Caco-2 (cell line): ENCODE measurements at regions of chr13 and their contacts with region 1.

Region 1: GRCh38 chr13:38530492-38530891 is 156.4 kb upstream of the FREM2 start:
- DNase-seq: no peak
- H3K4me3 ChIP-seq: no peak overlapping the region
- H3K4me3 Mint-ChIP-seq: no peak overlapping the region
- H3K27ac Mint-ChIP-seq: no peak overlapping the region
- H3K4me1 ChIP-seq: no peaks in the 10 kb centered on the region
- H3K4me1 Mint-ChIP-seq: peaks cover 10% of the 10 kb centered on the region
- H3K27me3 ChIP-seq: no peaks in the 10 kb centered on the region; the same call in 1 of the 2 replicates
- H3K27me3 Mint-ChIP-seq: no peaks in the 10 kb centered on the region
- CTCF ChIP-seq: peak; percentile 32 to 52

Region 2: DNA sequence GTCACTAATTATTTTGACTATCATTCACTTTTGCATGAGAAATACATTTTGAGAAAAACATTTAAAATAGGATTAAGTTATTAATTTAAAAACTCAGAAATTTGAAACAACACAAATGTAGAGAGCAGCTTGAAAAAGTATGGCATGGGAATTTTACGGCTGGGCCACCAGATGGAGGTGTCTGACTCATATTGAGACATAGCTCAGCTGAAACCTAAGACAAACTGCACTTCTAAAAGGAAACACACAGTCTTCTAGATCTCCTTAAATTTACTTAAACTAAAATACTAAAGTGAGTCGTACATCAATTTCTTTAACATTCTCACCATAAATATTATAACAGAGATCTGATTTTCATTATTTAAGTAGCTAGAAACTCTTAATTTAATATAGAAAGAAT is 890.0 kb before region 1 on chr13:
- CTCF ChIA-PET with region 1: interaction called, 3 read pairs
- POLR2A ChIA-PET with region 1: no interaction called
- intact Hi-C with region 1: loop called (anchors 10 kb)
- DNase-seq: peak in 1 of 2 experiments; percentile 10
- H3K4me3 ChIP-seq: no peak overlapping the region
- H3K4me3 Mint-ChIP-seq: no peak overlapping the region
- H3K27ac Mint-ChIP-seq: no peak overlapping the region
- H3K4me1 ChIP-seq: no peaks in the 10 kb centered on the region
- H3K4me1 Mint-ChIP-seq: no peaks in the 10 kb centered on the region
- H3K27me3 ChIP-seq: no peaks in the 10 kb centered on the region
- H3K27me3 Mint-ChIP-seq: peaks cover 21% of the 10 kb centered on the region
- CTCF ChIP-seq: peak; percentile 40 to 49

Region 3: DNA sequence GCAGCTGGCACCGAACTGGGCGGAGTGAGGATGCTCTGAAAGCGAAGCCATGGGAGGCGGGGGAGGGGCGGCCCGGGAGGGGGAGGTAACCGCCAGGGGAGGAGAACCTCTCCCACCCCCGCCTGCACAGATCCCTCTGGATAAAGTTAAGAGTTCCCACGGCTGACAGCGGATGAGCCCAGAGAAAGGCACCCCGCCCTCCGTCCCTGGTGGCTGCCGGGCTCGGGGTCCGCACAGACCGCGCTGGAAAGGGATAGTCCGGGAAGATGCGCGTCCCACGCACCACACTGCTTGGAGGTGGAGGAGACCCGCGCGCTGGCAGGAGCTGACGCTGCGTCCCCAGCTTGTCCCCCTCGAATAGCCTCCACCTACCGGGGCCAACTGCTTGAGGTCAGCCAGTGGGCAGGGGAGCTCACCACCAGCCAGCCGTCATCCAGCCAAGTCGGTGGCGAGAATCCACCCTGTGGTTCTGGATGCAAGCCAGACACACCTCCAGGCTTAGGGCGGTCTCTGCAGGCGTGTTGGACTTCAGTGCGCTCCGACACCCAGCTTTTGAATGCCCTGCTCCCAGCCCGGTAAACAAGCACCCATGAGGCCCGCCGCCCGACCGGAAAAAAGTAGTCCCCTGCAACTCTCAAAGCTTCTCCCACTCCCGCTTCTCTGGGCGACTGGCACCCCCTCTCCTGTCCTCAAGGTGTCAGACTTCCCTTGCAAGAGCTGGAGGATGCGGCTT is 660.6 kb before region 1 on chr13 and contains the start of gene TRPC4:
- CTCF ChIA-PET with region 1: no interaction called
- POLR2A ChIA-PET with region 1: no interaction called
- intact Hi-C with region 1: loop called (anchors 1 kb)
- DNase-seq: peak; percentile 42 to 46
- H3K4me3 ChIP-seq: no peak within 1 kb of the TSS
- H3K4me3 Mint-ChIP-seq: no peak within 1 kb of the TSS
- H3K27ac Mint-ChIP-seq: no peak within 1 kb of the TSS
- H3K4me1 ChIP-seq: no peaks in the 10 kb centered on the region
- H3K4me1 Mint-ChIP-seq: no peaks in the 10 kb centered on the region
- H3K27me3 ChIP-seq: no peaks in the 10 kb centered on the region; the same call in 1 of the 2 replicates
- H3K27me3 Mint-ChIP-seq: peaks cover 18% of the 10 kb centered on the region
- CTCF ChIP-seq: peak in 1 of 2 experiments; percentile 53
- total RNA-seq, gene TRPC4: not detected in 2 replicates

Region 4: DNA sequence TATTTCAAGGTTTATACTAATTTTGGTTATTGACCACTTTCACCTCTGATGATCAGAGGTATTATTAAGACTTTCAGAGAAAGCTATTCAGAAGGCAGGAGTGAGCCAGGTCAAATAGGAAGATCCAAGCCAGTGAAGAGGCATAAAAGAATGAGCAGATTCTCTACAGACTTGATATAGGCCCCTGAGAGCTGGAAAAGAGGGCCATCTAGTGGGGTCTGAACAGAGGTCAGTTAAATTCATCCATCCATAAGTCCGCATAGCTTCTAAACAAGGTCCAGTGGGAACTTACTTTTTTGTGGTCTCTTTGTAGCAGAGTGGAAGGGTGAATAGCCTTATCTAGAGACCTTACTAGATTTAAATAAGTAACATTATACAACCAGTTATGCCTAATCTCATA is 307.4 kb before region 1 on chr13:
- CTCF ChIA-PET with region 1: no interaction called
- POLR2A ChIA-PET with region 1: no interaction called
- intact Hi-C with region 1: loop called (anchors 10 kb)
- DNase-seq: peak in 1 of 2 experiments; percentile 29
- H3K4me3 ChIP-seq: no peak overlapping the region
- H3K4me3 Mint-ChIP-seq: no peak overlapping the region
- H3K27ac Mint-ChIP-seq: no peak overlapping the region
- H3K4me1 ChIP-seq: no peaks in the 10 kb centered on the region
- H3K4me1 Mint-ChIP-seq: no peaks in the 10 kb centered on the region
- H3K27me3 ChIP-seq: no peaks in the 10 kb centered on the region
- H3K27me3 Mint-ChIP-seq: no peaks in the 10 kb centered on the region
- CTCF ChIP-seq: peak in 1 of 2 experiments; percentile 51

Region 5: DNA sequence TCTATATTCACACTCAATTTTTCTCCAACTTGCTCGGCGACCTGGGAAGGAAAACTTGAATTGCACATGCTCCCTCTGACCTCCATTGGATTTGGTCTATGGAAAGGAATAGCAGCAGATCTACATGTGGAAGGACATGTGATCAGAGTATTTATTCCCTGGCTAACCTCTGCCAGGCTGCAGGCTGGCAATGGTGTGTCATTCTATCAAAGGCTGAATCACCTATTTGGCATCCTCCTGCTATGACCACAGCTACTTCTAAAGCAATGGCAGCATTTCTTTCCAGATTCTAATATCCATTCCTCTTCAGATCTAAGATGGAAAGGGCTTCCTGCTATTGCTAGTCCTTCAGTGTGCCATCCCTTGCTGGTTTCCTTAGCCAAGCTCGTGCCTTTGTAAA is 12.1 kb after region 1 on chr13:
- CTCF ChIA-PET with region 1: no interaction called
- POLR2A ChIA-PET with region 1: no interaction called
- intact Hi-C with region 1: no loop called
- DNase-seq: no peak
- H3K4me3 ChIP-seq: no peak overlapping the region
- H3K4me3 Mint-ChIP-seq: no peak overlapping the region
- H3K27ac Mint-ChIP-seq: no peak overlapping the region
- H3K4me1 ChIP-seq: no peaks in the 10 kb centered on the region
- H3K4me1 Mint-ChIP-seq: no peaks in the 10 kb centered on the region
- H3K27me3 ChIP-seq: no peaks in the 10 kb centered on the region; the same call in 1 of the 2 replicates
- H3K27me3 Mint-ChIP-seq: peaks cover 8% of the 10 kb centered on the region
- CTCF ChIP-seq: no peak

Region 6: DNA sequence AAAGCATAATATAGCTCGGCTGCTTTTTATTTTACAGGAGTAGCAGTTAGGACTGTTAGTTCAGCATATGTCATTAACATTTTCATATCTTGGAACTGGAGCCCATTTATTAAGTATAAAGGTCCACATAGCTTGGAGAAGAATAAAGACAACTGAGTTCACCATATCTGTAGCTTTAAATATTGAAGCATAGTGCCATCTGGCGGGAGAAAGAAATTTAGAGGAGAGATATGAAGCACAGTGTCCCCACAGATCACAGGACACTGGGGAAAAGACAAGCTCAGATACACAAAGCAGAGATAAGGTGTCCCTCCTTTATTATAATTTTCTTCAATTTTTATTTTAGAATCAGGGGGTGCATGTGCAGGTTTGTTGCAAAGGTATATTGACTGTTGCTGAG is 51.6 kb after region 1 on chr13:
- CTCF ChIA-PET with region 1: interaction called, 5 read pairs
- POLR2A ChIA-PET with region 1: no interaction called
- intact Hi-C with region 1: loop called (anchors 5 kb)
- DNase-seq: peak in 1 of 2 experiments; percentile 60
- H3K4me3 ChIP-seq: no peak overlapping the region
- H3K4me3 Mint-ChIP-seq: no peak overlapping the region
- H3K27ac Mint-ChIP-seq: no peak overlapping the region
- H3K4me1 ChIP-seq: no peaks in the 10 kb centered on the region
- H3K4me1 Mint-ChIP-seq: no peaks in the 10 kb centered on the region
- H3K27me3 ChIP-seq: no peaks in the 10 kb centered on the region
- H3K27me3 Mint-ChIP-seq: no peaks in the 10 kb centered on the region
- CTCF ChIP-seq: peak; percentile 58 to 71

Region 7: GRCh38 chr13:38804536-38804935 is 274.0 kb after region 1 on chr13:
- CTCF ChIA-PET with region 1: no interaction called
- POLR2A ChIA-PET with region 1: no interaction called
- intact Hi-C with region 1: no loop called
- DNase-seq: no peak
- H3K4me3 ChIP-seq: no peak overlapping the region
- H3K4me3 Mint-ChIP-seq: no peak overlapping the region
- H3K27ac Mint-ChIP-seq: no peak overlapping the region
- H3K4me1 ChIP-seq: no peaks in the 10 kb centered on the region
- H3K4me1 Mint-ChIP-seq: no peaks in the 10 kb centered on the region
- H3K27me3 ChIP-seq: no peaks in the 10 kb centered on the region
- H3K27me3 Mint-ChIP-seq: no peaks in the 10 kb centered on the region
- CTCF ChIP-seq: no peak